Heart right ventricle (tissue), 16 donors: ENCODE measurements at regions of chr18 and their contacts with region 1.

Region 1: DNA sequence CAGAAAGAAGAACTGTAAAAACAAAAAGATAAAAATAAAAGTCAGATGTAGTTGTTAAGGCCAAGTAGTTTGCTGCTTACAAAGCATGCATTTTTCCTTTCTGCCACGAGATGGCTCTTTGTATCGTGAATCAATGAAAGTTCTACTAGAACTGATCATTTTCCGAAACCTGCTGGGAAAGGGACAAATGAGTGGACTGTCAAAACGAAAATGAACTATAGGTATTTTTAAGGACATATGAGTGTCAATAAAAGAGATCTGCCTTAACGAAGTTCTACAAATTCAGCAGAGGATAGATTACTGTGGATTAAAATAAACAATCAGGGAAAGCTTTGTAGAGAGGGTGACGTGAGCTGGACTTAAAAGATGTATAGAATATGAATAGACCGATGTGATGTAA is 15.0 kb upstream of the ELOA2 start:
- DNase-seq: no peak
- ATAC-seq: no peak
- H3K4me3 ChIP-seq: no peak overlapping the region
- H3K27ac ChIP-seq: no peak overlapping the region
- H3K4me1 ChIP-seq: no peaks in the 10 kb centered on the region
- H3K27me3 ChIP-seq: no peaks in the 10 kb centered on the region
- CTCF ChIP-seq: peak; percentile 19 to 72 (median 65)

Region 2: GRCh38 chr18:46868169-46868921 is 182.1 kb before region 1 on chr18:
- intact Hi-C with region 1: no loop called
- DNase-seq: no peak
- ATAC-seq: peak in 2 of 8 donors; percentile 27 to 41
- H3K4me3 ChIP-seq: no peak overlapping the region
- H3K27ac ChIP-seq: peak overlapping the region in 1 of 10 donors; percentile 45
- H3K4me1 ChIP-seq: peaks cover 0 to 16% (median 0%) of the 10 kb centered on the region in 9 donors
- H3K27me3 ChIP-seq: no peaks in the 10 kb centered on the region
- CTCF ChIP-seq: no peak

Region 3: DNA sequence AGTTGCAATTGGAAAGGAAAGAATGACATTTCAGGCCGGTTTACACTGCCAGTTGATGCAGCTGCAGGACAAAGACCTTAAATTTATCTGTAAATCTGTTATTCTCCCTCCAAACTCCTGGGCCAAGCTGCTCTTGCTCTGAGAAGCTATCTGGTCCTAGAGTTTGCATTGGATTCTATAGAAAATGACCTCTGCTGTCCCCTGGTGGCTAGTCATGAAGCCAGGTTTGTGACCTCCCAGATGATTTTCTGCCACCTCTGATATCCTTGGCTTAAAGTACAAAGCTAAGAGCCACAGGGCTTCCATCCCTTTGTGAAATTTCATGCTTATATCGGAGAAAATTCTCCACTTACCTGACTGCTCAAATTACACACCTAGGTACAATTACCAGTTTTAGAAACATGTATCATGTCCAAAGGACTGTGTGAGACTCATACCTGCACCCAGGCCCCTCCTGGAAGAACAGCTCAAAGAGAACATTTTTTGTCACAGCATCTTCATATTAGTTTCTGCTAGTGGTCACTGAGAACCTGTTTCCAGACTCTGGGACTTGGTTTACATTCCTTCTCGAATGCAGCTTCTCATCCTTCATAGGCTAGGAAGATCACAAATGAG is 154.5 kb after region 1 on chr18:
- intact Hi-C with region 1: loop called in 1 of 10 experiments (anchors 5 kb)
- DNase-seq: peak in 1 of 2 donors; percentile 15
- ATAC-seq: peak in 1 of 8 donors; percentile 47
- H3K4me3 ChIP-seq: no peak overlapping the region
- H3K27ac ChIP-seq: no peak overlapping the region
- H3K4me1 ChIP-seq: peaks cover 0 to 10% (median 0%) of the 10 kb centered on the region in 9 donors
- H3K27me3 ChIP-seq: peaks cover 0 to 30% (median 18%) of the 10 kb centered on the region in 7 donors
- CTCF ChIP-seq: peak; percentile 47 to 83 (median 76)

Region 4: DNA sequence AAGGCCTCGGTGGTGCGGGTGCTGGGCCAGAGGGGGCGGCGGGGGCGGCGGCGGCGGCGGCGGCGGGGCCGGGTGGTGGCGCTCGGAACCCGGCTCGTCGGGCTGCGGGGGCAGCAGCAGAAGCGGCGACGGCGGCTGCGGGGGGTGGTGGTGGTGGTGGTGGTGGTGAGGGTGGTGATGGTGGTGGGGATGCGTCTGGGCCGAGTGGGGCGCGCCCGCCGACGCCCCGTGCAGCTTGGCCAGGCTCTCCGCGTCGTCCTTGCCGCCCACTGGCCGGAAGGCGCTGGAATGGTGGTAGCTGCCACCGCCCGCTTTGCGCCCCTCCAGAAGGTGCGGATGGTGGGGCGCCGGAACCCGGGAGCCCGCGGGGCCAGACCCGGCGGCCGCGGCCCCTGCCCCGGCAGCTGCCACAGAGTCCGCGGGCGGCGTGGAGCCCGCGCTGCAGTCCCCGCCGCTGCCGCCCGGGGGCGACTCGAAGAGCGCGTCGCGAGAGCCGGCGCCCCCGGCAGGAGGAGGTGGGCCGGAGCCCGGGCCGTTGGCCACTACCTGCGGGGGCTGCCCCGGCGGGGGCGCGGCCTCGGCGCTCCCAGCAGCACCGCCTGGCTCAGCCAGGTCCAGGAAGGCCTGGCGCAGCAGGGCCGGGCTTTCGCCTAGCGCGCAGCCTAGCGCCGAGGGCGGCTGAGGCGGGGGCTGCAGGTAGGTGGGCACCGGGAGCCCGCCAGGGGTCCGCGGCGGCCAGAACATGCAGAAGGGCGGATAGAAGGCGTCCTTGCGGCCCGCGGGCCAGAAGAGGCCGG is 196.8 kb after region 1 on chr18:
- intact Hi-C with region 1: no loop called
- DNase-seq: no peak
- ATAC-seq: peak in 1 of 8 donors; percentile 18
- H3K4me3 ChIP-seq: no peak overlapping the region
- H3K27ac ChIP-seq: no peak overlapping the region
- H3K4me1 ChIP-seq: peaks cover 0 to 8% (median 2%) of the 10 kb centered on the region in 9 donors
- H3K27me3 ChIP-seq: peaks cover 31 to 100% (median 97%) of the 10 kb centered on the region in 7 donors
- CTCF ChIP-seq: peak in 6 of 9 donors; percentile 8 to 44 (median 32)

Region 5: GRCh38 chr18:47748847-47749599 is 698.6 kb after region 1 on chr18:
- intact Hi-C with region 1: loop called in 4 of 10 experiments (anchors 5 kb)
- DNase-seq: peak; percentile 63 to 83
- ATAC-seq: peak; percentile 90 to 96 (median 94)
- H3K4me3 ChIP-seq: peak overlapping the region in 7 of 10 donors; percentile 2 to 47 (median 35)
- H3K27ac ChIP-seq: no peak overlapping the region
- H3K4me1 ChIP-seq: peaks cover 0 to 5% (median 3%) of the 10 kb centered on the region in 9 donors
- H3K27me3 ChIP-seq: peaks cover 0 to 34% (median 16%) of the 10 kb centered on the region in 7 donors
- CTCF ChIP-seq: peak in 8 of 9 donors; percentile 99 to 100 (median 100)

Region 6: DNA sequence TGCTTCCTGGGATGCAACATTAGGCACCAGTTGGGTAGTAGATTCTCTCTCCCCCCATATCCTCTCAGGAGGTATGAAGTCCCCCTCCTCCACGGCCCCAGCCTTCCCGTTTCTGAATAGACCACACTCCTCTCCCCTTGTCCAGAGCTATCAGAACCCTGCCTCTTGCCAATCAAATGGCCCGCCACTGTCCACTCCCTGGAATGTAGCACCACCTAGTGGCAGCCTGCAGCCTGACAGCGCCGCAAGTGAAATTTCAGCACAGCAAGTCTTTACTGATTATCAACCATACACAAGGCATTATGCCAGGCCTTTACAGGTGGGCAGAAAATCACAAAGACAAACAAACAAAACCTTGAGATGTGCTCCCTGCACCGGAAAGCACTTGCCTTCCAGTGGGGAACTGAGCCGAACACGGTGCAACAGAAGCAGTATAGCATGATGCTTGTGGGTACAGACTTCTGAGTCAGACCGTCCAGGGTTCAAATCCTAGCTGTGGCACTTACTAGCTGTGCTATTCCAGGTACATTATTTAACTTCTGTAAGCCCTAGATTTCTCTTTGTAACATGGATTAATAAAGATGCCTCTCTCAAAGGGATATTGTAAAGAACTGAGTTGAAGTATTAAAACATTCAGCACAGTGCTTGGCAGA is 706.0 kb after region 1 on chr18:
- intact Hi-C with region 1: loop called in 1 of 10 experiments (anchors 5 kb)
- DNase-seq: peak; percentile 27 to 49
- ATAC-seq: peak in 7 of 8 donors; percentile 25 to 60 (median 47)
- H3K4me3 ChIP-seq: no peak overlapping the region
- H3K27ac ChIP-seq: no peak overlapping the region
- H3K4me1 ChIP-seq: no peaks in the 10 kb centered on the region
- H3K27me3 ChIP-seq: peaks cover 0 to 35% (median 17%) of the 10 kb centered on the region in 7 donors
- CTCF ChIP-seq: peak; percentile 70 to 88 (median 84)